GM12878 (cell line): ENCODE measurements at regions of chr17 and their contacts with region 1.

Region 1: GRCh38 chr17:17681187-17681848 is at the start of gene RAI1:
- DNase-seq: no peak
- ATAC-seq: peak; percentile 41
- H3K4me3 ChIP-seq: peak within 1 kb of the TSS; percentile 99
- H3K27ac ChIP-seq: peak within 1 kb of the TSS; percentile 90
- H3K4me1 ChIP-seq: peaks cover 30% of the 10 kb centered on the region
- H3K27me3 ChIP-seq: no peaks in the 10 kb centered on the region; a peak in 1 of 4 replicates
- CTCF ChIP-seq: peak; percentile 48 to 80 (median 63); a peak in 5 of 6 replicates
- EP300 ChIP-seq: no peak
- POLR2A ChIP-seq: no peak; the same call in 1 of the 2 replicates
- RAD21 ChIP-seq: peak; percentile 84
- polyA plus RNA-seq, gene RAI1: 0.66 to 0.74 TPM

Region 2: GRCh38 chr17:17694169-17695081 is 13.1 kb after region 1 on chr17:
- CTCF ChIA-PET with region 1: interaction called, 14 read pairs
- POLR2A ChIA-PET with region 1: interaction called, 56 read pairs
- RAD21 ChIA-PET with region 1: interaction called, 75 read pairs
- SMC1A ChIA-PET with region 1: interaction called, 47 read pairs
- in situ Hi-C with region 1: no loop called
- intact Hi-C with region 1: loop called (anchors 1 kb)
- DNase-seq: no peak
- ATAC-seq: peak; percentile 51
- H3K4me3 ChIP-seq: peak overlapping the region; percentile 86
- H3K27ac ChIP-seq: peak overlapping the region; percentile 77
- H3K4me1 ChIP-seq: peaks cover 55% of the 10 kb centered on the region
- H3K27me3 ChIP-seq: no peaks in the 10 kb centered on the region
- CTCF ChIP-seq: no peak
- EP300 ChIP-seq: no peak
- POLR2A ChIP-seq: peak; percentile 59
- RAD21 ChIP-seq: no peak

Region 3: GRCh38 chr17:17729620-17730249 is 48.4 kb after region 1 on chr17:
- CTCF ChIA-PET with region 1: interaction called, 3 read pairs
- POLR2A ChIA-PET with region 1: interaction called, 3 read pairs
- RAD21 ChIA-PET with region 1: interaction called, 4 read pairs
- SMC1A ChIA-PET with region 1: interaction called, 3 read pairs
- in situ Hi-C with region 1: no loop called
- intact Hi-C with region 1: loop called (anchors 5 kb)
- DNase-seq: no peak
- ATAC-seq: peak; percentile 93
- H3K4me3 ChIP-seq: no peak overlapping the region
- H3K27ac ChIP-seq: no peak overlapping the region
- H3K4me1 ChIP-seq: peaks cover 12% of the 10 kb centered on the region
- H3K27me3 ChIP-seq: no peaks in the 10 kb centered on the region
- CTCF ChIP-seq: peak; percentile 74 to 89 (median 85)
- EP300 ChIP-seq: no peak
- POLR2A ChIP-seq: no peak
- RAD21 ChIP-seq: peak; percentile 78

Region 4: DNA sequence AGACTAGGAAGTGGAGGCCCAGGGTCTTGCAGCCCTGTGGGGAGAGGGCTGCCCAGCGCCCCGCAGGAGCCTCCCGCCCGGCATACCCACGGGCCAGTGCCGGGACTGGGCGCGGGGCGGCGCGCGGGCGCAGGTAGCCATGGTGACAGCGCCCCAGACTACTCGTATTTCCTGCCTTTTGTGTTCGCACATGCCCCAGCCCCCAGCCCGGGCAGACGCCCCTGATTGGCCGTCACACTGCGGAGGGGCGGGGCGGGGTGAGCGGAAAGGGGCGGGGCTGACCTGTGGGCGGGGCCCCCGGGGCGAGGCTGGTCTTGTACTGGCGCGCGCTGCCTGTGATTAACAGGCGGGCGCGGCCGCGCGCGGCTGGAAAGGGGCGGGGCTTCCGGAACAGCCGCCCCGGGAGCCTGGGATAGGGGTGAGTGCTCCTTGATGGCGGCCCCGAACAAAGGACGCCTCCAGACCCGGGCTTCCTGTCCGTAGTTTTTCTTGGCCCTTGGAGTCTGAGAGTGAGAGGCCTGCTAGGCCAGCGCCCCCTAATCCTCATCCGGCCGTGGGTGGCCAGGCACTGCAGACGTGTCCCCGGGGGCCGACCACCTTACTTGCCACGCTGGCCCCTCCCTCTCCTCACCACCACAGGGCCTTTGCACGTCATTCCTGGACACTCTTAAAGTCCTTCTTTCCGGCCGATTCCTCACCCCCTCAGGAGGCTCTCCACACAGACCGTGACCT is 70.9 kb after region 1 on chr17:
- CTCF ChIA-PET with region 1: interaction called, 4 read pairs
- POLR2A ChIA-PET with region 1: interaction called, 9 read pairs
- RAD21 ChIA-PET with region 1: interaction called, 4 read pairs
- SMC1A ChIA-PET with region 1: interaction called, 6 read pairs
- in situ Hi-C with region 1: no loop called
- intact Hi-C with region 1: loop called (anchors 1 kb)
- DNase-seq: peak; percentile 74
- ATAC-seq: peak; percentile 91
- H3K4me3 ChIP-seq: peak overlapping the region; percentile 77
- H3K27ac ChIP-seq: peak overlapping the region; percentile 83
- H3K4me1 ChIP-seq: peaks cover 55% of the 10 kb centered on the region
- H3K27me3 ChIP-seq: no peaks in the 10 kb centered on the region
- CTCF ChIP-seq: peak; percentile 26 to 57 (median 46); a peak in 4 of 6 replicates
- EP300 ChIP-seq: no peak
- POLR2A ChIP-seq: peak; percentile 67
- RAD21 ChIP-seq: no peak

Region 5: GRCh38 chr17:17812211-17813057 is 131.1 kb after region 1 on chr17:
- CTCF ChIA-PET with region 1: interaction called, 7 read pairs
- POLR2A ChIA-PET with region 1: interaction called, 3 read pairs
- RAD21 ChIA-PET with region 1: interaction called, 6 read pairs
- SMC1A ChIA-PET with region 1: interaction called, 8 read pairs
- in situ Hi-C with region 1: no loop called
- intact Hi-C with region 1: loop called (anchors 1 kb)
- DNase-seq: no peak
- ATAC-seq: peak; percentile 77
- H3K4me3 ChIP-seq: no peak overlapping the region
- H3K27ac ChIP-seq: no peak overlapping the region
- H3K4me1 ChIP-seq: peaks cover 8% of the 10 kb centered on the region
- H3K27me3 ChIP-seq: no peaks in the 10 kb centered on the region
- CTCF ChIP-seq: peak; percentile 97 to 99 (median 98); a peak in 5 of 6 replicates
- EP300 ChIP-seq: no peak
- POLR2A ChIP-seq: no peak
- RAD21 ChIP-seq: peak; percentile 74

Region 6: DNA sequence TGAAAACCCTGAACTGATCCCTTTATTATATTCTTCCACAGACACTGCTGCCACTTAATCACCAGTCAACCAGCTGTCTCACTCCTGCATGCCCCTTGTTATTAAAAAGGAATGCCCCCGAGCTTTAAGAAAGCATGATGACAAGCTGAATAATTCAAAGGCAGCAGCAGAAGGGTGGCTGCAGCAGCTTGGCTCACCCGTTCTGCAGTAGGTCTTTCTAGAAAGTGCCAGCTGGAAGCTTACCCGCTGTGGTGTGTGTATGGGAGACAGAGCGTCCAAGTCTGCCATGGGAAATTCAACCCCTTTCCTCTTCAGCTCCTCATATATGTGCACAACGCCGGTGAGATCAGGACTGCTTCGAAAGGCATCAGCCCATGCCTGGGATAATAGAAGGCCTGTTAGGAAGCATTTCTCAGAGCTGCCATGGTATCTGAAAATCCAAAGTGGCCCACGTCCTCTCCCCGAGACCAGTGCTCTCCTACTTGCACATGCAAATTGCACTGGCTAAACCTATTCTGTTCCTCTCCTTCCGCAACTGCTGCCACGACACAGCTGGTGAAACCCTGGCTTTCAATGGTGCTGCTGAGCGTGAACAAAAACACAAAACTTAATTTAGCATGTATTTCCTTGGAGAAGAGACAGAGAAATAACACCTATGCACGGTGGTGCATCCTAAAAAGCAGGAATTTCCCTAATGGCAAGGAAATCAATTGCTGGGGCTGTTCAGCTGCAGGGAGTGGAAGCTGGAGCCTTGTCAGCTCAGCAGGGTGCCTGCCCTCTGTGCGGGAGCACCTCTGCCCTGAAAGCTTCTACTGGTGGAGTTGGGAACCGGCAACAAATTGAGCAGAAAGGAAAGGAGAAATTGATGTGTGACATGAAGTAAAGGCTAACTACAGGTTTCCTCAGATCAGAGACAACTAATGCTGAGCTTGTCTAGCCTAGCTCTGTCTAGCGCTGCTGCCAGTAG is 203.4 kb after region 1 on chr17:
- CTCF ChIA-PET with region 1: no interaction called
- POLR2A ChIA-PET with region 1: no interaction called
- RAD21 ChIA-PET with region 1: no interaction called
- SMC1A ChIA-PET with region 1: no interaction called
- in situ Hi-C with region 1: no loop called
- intact Hi-C with region 1: no loop called
- DNase-seq: no peak
- ATAC-seq: no peak
- H3K4me3 ChIP-seq: no peak overlapping the region
- H3K27ac ChIP-seq: no peak overlapping the region
- H3K4me1 ChIP-seq: peaks cover 3% of the 10 kb centered on the region
- H3K27me3 ChIP-seq: no peaks in the 10 kb centered on the region
- CTCF ChIP-seq: no peak
- EP300 ChIP-seq: no peak
- POLR2A ChIP-seq: no peak
- RAD21 ChIP-seq: no peak